Mammary epithelial cell (primary cell): ENCODE measurements at regions of chr5 and their contacts with region 1.

Region 1: GRCh38 chr5:1204693-1205242 is 3.4 kb downstream of the SLC6A19 start:
- DNase-seq: no peak
- H3K4me3 ChIP-seq: no peak overlapping the region
- H3K27ac ChIP-seq: no peak overlapping the region
- H3K4me1 ChIP-seq: no peaks in the 10 kb centered on the region
- H3K27me3 ChIP-seq: peaks cover 13% of the 10 kb centered on the region
- CTCF ChIP-seq: peak in 1 of 2 donors; percentile 26

Region 2: DNA sequence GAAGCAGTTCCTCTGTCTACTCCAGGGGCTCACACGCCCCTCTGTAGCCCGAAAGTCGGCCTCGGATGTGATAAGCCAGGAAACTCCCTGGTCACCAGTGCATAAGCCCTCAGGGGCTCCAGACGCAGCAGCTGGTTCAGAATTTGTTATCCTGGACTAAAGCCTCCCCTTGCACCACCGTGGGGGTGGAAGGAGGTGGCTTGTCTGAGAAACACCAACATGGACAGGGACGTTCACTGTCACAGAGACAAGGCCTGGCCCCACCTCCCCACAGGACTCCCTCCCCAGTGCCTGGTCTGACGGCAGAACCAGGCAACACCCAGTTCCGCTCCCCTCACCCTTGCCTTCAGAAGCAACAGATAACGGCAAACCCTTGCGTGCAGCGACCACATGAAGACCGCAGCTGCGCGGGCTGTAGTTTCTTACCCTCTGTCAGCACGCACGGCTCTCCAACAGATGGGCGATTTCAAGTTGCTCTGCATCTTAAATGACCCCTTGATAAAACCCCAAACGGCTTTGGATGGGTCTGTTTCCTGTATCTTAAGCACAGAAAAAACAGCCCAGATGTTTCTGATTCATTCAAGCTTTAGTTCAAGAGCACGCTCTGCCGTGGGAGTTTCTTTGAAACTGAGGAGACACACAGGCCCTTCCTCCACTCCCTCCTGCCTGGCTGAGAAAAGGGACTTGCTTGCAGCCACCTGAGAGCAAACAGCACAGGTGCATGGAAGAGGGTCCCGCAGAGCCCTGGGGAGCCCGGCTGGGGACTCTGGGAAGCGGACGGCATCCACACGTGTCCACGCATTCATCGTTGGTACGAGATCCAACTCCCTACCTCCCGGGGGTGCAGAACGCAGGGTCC is 240.9 kb before region 1 on chr5:
- CTCF ChIA-PET with region 1: no interaction called
- dilution Hi-C with region 1: loop called (anchors 5 kb)
- in situ Hi-C with region 1: no loop called
- intact Hi-C with region 1: no loop called
- DNase-seq: no peak
- H3K4me3 ChIP-seq: no peak overlapping the region
- H3K27ac ChIP-seq: no peak overlapping the region
- H3K4me1 ChIP-seq: peaks cover 4% of the 10 kb centered on the region
- H3K27me3 ChIP-seq: peaks cover 14% of the 10 kb centered on the region
- CTCF ChIP-seq: no peak

Region 3: GRCh38 chr5:1111727-1112289 is 93.0 kb before region 1 on chr5 and contains the start of gene SLC12A7:
- CTCF ChIA-PET with region 1: no interaction called
- dilution Hi-C with region 1: no loop called
- in situ Hi-C with region 1: no loop called
- intact Hi-C with region 1: no loop called
- DNase-seq: peak; percentile 35
- H3K4me3 ChIP-seq: peak within 1 kb of the TSS; percentile 71 to 88 (median 71)
- H3K27ac ChIP-seq: peak within 1 kb of the TSS; percentile 36
- H3K4me1 ChIP-seq: peaks cover 13% of the 10 kb centered on the region
- H3K27me3 ChIP-seq: no peaks in the 10 kb centered on the region
- CTCF ChIP-seq: no peak
- total RNA-seq, gene SLC12A7: 10.5 to 21.2 TPM

Region 4: DNA sequence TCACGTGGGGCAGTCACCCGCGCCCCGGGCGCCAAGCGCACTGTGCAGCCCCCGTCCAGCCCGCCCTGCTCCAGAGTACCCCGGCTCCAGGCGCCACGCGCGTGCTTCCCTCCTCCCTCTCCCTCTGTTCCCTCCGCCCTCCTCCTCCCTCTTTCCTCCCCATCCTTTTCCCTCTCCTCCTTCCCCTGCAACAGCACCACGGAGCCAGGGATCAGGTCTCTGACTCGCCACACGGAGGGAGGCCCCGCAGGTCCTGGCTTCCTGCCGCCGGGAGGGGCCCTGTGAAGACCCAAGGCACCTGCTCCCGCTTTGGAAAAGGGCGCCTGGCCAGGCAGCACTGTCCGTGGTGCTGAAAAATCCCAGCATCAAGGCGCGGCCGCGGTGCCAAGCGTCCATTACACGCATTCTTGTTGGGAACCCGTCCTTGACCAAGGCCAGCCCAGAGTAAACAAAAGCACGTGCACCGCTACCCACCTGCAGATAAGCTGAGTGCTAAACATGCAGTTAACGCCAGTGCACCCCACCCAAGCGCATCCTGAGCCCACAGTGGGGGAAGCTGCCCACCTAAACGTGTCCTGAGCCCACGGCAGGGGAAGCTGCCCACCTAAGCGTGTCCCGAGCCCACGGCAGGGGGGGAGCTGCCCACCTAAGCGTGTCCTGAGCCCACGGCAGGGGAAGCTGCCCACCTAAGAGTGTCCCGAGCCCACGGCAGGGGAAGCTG is 42.1 kb after region 1 on chr5:
- CTCF ChIA-PET with region 1: no interaction called
- dilution Hi-C with region 1: loop called (anchors 5 kb)
- in situ Hi-C with region 1: no loop called
- intact Hi-C with region 1: no loop called
- DNase-seq: peak; percentile 24
- H3K4me3 ChIP-seq: no peak overlapping the region
- H3K27ac ChIP-seq: no peak overlapping the region
- H3K4me1 ChIP-seq: no peaks in the 10 kb centered on the region
- H3K27me3 ChIP-seq: no peaks in the 10 kb centered on the region
- CTCF ChIP-seq: no peak